BJ (cell line): ENCODE measurements at regions of chr1 and their contacts with region 1.

Region 1: DNA sequence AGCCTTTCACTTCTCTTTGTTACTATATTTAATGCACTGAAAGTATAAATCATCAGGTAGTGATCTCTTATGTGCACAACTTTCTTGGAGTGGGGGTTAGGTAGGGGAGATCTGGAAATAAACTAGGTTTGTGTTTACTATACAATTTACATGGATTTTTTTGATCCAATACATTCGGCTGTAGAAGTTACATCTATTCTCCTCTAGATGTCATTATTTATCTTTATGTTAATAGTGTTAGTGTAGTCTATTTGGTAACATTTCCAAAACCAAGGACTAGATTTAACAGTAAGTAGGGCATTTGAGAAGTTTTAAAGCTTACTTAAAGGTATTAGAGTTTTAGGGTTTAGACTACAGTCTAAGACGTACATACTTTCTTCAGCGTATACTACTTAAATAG is 5.4 kb downstream of the VPS45 start:
- DNase-seq: no peak
- H3K4me3 ChIP-seq: no peak overlapping the region
- H3K27me3 ChIP-seq: no peaks in the 10 kb centered on the region
- CTCF ChIP-seq: peak; percentile 38; the same call in 1 of the 2 replicates

Region 2: DNA sequence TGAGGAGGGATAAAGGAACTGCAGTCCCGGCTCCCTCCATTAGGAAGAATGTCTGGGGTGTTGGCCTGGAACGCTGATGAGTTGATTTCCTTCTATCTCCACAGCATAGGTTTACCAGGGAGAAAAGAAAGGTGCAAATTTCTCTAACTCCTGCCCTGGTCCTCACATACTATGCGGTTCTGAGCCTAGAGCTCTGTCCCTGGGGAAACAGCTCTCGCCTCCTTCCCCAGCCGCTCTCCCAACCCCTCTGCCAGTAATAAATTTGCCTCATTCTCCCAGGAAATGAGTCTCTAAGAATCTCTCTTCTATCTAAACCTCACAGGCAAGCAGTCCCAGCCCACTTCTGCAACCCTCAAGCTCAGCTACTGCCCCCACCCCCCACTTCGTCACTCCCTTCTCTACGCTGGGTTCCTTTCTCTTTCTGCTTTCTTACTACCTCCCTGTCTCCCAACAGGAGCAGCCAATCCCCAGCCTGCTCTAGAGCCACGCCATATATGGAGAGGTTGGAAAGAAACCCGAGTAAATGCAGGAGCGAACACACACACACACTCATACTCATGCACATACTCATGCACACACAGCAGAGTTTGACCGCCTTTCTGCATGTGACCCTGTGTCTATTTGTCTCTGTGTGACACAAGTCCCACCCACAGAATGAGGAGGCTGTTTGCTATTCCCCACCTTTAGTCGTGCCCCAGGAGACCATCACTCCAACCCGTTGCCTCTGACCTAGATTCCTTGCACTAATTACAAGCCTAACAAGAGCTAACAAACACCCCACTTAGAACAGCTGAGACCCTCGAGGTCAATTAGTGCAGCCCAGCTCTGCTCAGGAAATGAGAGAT is 90.1 kb after region 1 on chr1:
- CTCF ChIA-PET with region 1: interaction called, 101 read pairs
- POLR2A ChIA-PET with region 1: no interaction called
- DNase-seq: peak; percentile 96
- H3K4me3 ChIP-seq: peak overlapping the region; percentile 15
- H3K27me3 ChIP-seq: no peaks in the 10 kb centered on the region
- CTCF ChIP-seq: peak; percentile 29; the same call in 1 of the 2 replicates

Region 3: DNA sequence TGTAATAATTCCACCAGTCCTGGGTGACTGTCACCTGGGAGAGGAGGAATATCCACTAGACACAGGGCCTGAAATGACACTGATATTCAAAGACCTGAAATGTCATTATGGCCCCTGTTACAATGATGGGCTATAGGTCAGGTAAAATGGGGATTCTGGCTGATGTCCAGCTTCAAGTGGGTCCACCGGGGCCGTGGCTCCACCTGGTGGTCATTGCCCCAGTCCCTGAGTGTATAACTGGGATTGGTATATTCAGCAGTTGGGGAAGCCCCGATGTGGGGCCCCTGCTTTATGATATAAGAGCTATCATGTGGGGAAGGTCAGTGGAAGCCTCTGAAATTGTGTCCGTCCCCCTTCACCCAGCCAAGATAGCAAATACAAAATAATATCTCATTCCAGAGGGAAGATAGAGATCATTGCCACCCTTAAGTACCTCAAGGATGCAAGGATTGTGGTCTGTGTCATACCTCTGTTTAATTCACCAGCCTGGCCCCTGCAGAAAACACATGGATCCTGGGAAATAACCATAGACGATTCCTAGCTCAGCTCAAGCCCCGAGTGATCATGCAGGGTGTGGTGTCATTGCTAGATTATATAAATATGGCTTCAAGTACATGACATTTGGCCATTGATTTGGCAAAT is 96.1 kb after region 1 on chr1:
- CTCF ChIA-PET with region 1: interaction called, 101 read pairs
- POLR2A ChIA-PET with region 1: no interaction called
- DNase-seq: no peak
- H3K4me3 ChIP-seq: no peak overlapping the region
- H3K27me3 ChIP-seq: no peaks in the 10 kb centered on the region
- CTCF ChIP-seq: peak; percentile 85